ENCODE measurements at regions of chr13 and their contacts with region 1.

Region 1: DNA sequence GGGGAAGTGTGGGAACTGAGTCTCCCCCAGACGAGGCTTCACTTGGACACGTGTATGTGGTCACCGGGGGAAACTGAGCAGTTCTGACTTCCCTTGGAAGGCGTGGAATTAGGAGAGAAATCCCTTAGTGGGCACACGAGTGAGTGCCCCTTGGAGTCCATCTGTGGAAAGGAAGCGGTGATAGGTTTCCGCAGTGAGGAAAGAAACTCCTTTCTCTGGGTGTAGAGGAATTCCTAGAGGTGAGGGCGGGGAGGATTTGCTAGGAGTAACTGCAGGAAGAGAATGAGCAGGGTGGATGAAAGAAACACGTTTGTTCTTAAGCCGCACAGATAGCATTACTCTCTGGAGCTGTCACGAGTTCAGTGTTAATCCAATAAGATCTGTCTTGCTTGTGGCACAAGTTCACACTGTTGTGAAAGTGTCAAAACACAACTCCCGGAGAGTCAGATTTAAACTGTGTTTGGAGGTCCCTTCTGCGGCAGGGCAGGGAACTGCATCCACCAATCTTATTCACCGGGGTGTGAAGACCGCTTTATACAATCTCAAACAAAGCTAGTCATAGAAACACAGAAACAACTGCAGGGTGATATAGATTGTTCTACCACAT is 1.2 kb downstream of the KL start:
- DNase-seq: peak in 4 of 5 donors; percentile 50 to 57 (median 56)
- ATAC-seq: peak; percentile 73 to 87 (median 86)
- H3K4me3 ChIP-seq: peak overlapping the region; percentile 42 to 69 (median 63)
- H3K27ac ChIP-seq: peak overlapping the region; percentile 68 to 93 (median 88)
- H3K4me1 ChIP-seq: peaks cover 0 to 24% (median 11%) of the 10 kb centered on the region in 12 donors
- H3K27me3 ChIP-seq: peaks cover 0 to 33% (median 0%) of the 10 kb centered on the region in 9 donors
- CTCF ChIP-seq: peak; percentile 43 to 74 (median 65)
- POLR2A ChIP-seq: peak in 1 of 2 donors; percentile 41

Region 2: GRCh38 chr13:32737111-32737571 is 280.3 kb before region 1 on chr13:
- intact Hi-C with region 1: loop called in 1 of 10 experiments (anchors 10 kb)
- DNase-seq: no peak
- ATAC-seq: peak in 2 of 4 donors; percentile 39 to 54
- H3K4me3 ChIP-seq: peak overlapping the region in 10 of 12 donors; percentile 0 to 55 (median 36)
- H3K27ac ChIP-seq: peak overlapping the region; percentile 14 to 82 (median 65)
- H3K4me1 ChIP-seq: peaks cover 0 to 25% (median 0%) of the 10 kb centered on the region in 12 donors
- H3K27me3 ChIP-seq: no peaks in the 10 kb centered on the region
- CTCF ChIP-seq: no peak
- POLR2A ChIP-seq: no peak

Measured in heart left ventricle (tissue), 16 donors.